Activated CD4-positive, alpha-beta memory T cell treated with anti-CD3 and anti-CD28 coated beads for 36 hours (primary cell): ENCODE measurements at regions of chr14 and their contacts with region 1.

Region 1: GRCh38 chr14:24160850-24161804 is at the start of gene IRF9:
- DNase-seq: peak; percentile 99
- H3K4me3 Mint-ChIP-seq: peak within 1 kb of the TSS; percentile 97
- H3K27ac Mint-ChIP-seq: peak within 1 kb of the TSS; percentile 100
- H3K4me1 Mint-ChIP-seq: peaks cover 37% of the 10 kb centered on the region
- H3K27me3 Mint-ChIP-seq: no peaks in the 10 kb centered on the region
- total RNA-seq, gene IRF9: 158 to 172 TPM

Region 2: DNA sequence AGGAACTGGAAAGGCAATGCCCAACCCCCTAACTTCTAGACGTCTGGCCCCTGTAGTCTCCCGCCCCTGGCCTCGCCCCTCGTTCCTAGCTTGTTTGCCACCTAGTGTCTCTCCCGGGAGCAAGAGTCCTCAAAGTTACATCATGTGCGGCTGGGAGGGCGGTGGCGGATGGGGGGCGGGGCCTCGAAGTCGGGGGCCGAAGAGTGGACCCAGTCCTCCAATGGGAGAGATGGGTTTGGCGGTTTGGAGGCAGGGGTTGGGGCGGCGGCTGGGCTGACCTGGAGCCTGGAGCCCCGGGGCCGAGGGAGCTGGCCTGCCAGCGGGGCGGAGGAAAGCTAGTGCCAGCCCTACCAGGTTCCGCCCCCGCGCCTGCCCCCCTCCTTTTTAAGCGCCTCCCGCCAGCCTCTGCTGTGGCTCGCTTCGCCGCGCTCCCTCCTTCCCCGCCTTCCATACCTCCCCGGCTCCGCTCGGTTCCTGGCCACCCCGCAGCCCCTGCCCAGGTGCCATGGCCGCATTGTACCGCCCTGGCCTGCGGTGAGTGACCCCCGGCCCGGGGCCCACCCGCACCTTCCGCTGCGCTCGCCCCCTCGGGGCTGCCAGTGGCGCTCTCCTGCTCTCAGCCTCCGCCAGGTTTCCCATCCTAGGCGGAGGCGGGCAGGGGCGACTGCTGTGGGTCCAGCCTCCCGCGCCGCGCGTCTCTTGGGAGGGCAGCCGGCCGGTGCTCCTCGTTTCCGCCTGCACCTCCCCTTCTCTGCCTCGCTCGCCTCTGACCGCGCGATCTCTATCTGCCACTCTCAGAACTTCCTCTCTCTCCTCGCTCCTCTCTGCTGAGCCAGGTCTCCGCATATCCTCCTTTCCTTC is 67.0 kb before region 1 on chr14 and contains the start of gene PCK2:
- CTCF ChIA-PET with region 1: interaction called, 22 read pairs
- POLR2A ChIA-PET with region 1: interaction called, 4 read pairs
- intact Hi-C with region 1: no loop called
- DNase-seq: peak; percentile 94
- H3K4me3 Mint-ChIP-seq: peak within 1 kb of the TSS; percentile 94
- H3K27ac Mint-ChIP-seq: peak within 1 kb of the TSS; percentile 97
- H3K4me1 Mint-ChIP-seq: peaks cover 28% of the 10 kb centered on the region
- H3K27me3 Mint-ChIP-seq: no peaks in the 10 kb centered on the region
- total RNA-seq, gene PCK2: 118 to 125 TPM

Region 3: DNA sequence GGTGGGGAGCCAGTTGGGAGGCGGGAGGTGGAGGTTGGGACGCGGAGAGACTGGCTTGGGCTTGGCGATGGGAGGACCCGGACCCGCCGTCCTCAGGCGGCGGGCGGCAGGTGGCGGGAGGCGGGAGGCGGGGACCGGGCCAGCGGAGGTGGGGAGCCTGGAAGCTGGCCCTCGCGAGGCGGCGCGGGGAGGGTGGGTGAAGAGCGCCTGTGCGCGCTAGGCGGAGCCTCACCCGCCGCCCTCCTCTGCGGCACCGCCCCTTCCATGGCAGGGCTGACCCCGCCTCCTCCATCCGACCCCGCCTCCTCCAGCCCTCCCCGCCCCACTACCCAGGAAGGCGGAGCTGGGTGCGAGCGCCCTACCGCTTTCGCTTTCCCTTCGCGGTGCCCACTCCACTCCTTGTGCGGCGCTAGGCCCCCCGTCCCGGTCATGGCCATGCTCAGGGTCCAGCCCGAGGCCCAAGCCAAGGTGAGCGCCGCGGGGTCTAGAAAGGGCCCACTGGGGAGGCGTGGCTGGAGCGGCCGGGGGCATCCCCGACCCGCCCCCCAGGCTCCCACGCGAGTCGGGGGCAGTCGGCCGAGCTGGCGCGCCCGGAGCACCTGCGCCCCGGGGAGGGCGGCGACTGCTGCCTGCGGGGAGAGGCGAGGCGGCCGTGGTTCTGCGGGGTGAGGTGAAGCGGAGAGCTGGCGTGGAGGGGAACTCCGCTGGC is 25.1 kb before region 1 on chr14 and contains the start of gene PSME1:
- CTCF ChIA-PET with region 1: interaction called, 59 read pairs
- POLR2A ChIA-PET with region 1: interaction called, 18 read pairs
- intact Hi-C with region 1: loop called (anchors 1 kb)
- DNase-seq: peak; percentile 97
- H3K4me3 Mint-ChIP-seq: peak within 1 kb of the TSS; percentile 95
- H3K27ac Mint-ChIP-seq: peak within 1 kb of the TSS; percentile 96
- H3K4me1 Mint-ChIP-seq: peaks cover 54% of the 10 kb centered on the region
- H3K27me3 Mint-ChIP-seq: no peaks in the 10 kb centered on the region
- total RNA-seq, gene PSME1: 403 to 427 TPM

Region 4: GRCh38 chr14:24171422-24172260 is 10.5 kb after region 1 on chr14 and contains the start of gene REC8:
- CTCF ChIA-PET with region 1: interaction called, 10 read pairs
- POLR2A ChIA-PET with region 1: interaction called, 9 read pairs
- intact Hi-C with region 1: no loop called
- DNase-seq: peak; percentile 81
- H3K4me3 Mint-ChIP-seq: peak within 1 kb of the TSS; percentile 68
- H3K27ac Mint-ChIP-seq: peak within 1 kb of the TSS; percentile 61
- H3K4me1 Mint-ChIP-seq: peaks cover 22% of the 10 kb centered on the region
- H3K27me3 Mint-ChIP-seq: no peaks in the 10 kb centered on the region
- total RNA-seq, gene REC8: 24.9 to 27.9 TPM

Region 5: GRCh38 chr14:24195191-24196070 is 34.3 kb after region 1 on chr14 and contains the start of gene TM9SF1:
- CTCF ChIA-PET with region 1: interaction called, 10 read pairs
- POLR2A ChIA-PET with region 1: interaction called, 26 read pairs
- intact Hi-C with region 1: no loop called
- DNase-seq: peak; percentile 91
- H3K4me3 Mint-ChIP-seq: peak within 1 kb of the TSS; percentile 96
- H3K27ac Mint-ChIP-seq: peak within 1 kb of the TSS; percentile 95
- H3K4me1 Mint-ChIP-seq: peaks cover 55% of the 10 kb centered on the region
- H3K27me3 Mint-ChIP-seq: no peaks in the 10 kb centered on the region
- total RNA-seq, gene TM9SF1: 23.7 to 26.7 TPM

Region 6: DNA sequence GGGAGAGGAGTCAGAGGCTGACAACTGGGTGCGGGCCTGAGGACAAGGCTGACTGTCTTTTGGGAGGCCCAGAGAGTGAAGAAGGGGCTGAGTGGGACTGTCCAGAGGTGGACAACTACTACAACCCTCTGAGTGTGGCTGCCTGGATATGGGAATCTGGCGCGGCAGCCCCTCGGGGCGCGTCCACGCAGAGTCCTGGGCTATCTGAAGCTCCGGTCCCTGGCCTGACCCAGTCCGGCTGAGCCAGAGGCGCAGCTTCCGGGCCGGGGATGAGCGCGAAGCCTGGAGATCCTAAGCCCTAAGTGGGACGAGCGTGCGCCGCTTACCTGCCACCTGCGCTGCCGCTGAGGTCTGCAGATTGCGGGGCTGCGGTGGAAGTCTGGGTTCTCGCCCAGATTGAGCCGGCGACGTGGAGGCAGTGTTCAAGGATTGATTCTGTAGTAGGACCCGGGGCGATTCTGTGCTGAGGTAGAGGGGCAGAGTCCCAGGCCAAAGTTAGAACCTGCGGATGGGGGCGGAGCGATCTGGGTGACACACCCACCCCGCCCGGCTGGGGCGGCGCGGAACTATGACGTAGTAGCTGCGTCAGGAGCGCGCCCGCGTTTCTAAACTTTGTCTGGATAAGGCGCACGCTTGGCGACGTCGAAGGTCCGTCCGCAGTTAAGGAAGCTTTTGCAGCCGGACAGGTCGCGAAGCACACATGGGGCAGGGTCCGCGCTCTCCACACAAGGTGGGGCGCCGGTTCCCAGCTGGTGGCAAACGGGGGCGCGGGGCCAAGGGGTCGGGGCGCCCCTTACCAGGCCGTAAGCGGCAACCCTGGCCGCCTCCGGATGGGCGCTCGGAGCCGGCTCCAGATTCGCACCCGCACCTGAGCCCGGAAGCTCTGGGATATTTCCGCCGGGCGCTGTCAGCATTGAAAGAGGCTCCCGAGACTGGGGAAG is 138.4 kb after region 1 on chr14 and contains the starts of genes DHRS1 and NOP9:
- CTCF ChIA-PET with region 1: interaction called, 18 read pairs
- POLR2A ChIA-PET with region 1: no interaction called
- intact Hi-C with region 1: loop called (anchors 1 kb)
- DNase-seq: peak; percentile 96
- H3K4me3 Mint-ChIP-seq: peak within 1 kb of the TSS; percentile 90
- H3K27ac Mint-ChIP-seq: peak within 1 kb of the TSS; percentile 84
- H3K4me1 Mint-ChIP-seq: peaks cover 50% of the 10 kb centered on the region
- H3K27me3 Mint-ChIP-seq: no peaks in the 10 kb centered on the region
- total RNA-seq, gene DHRS1: 14.7 to 14.9 TPM
- total RNA-seq, gene NOP9: 30.7 to 30.9 TPM